Astrocyte of the cerebellum (primary cell): ENCODE measurements at regions of chr17 and their contacts with region 1.

Region 1: DNA sequence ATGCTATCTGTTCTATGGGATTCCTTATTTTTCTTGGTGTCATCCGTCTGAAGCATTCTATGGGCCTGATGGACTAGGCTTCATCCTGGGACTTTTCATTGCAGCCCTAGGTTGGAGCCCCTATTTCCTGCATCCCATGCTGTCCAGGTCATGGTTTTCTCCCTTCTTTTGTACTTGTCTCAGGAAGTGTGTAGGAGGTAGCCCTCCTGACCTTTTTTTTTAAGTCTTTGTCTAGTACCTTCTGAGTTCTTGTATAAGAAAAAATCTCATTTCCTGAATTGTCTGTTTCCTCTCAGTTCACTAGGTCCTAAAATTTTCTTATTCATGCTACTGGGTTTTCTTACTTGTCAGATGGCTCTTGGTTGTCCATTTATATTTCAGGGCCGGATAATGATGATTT is 6.0 kb downstream of the NDEL1 start:
- DNase-seq: no peak
- H3K4me3 ChIP-seq: no peak overlapping the region
- CTCF ChIP-seq: no peak

Region 2: DNA sequence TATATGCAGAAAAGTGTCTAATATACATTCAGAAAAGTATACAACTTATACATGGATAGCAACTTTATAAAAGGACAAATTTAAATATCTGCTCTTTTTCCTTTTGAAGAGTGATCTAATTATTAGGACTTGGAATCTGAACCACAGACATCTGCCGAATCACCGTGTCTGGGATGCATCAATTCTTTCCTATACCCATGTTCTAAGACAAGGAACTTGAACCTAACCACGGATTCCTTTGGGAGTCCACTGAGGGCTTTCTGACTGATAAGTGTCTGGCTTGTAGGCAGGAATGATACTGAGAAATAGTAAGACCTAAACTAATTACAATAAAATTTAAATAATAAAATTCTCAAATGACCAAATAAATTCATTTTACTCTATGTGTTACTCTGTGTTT is 48.2 kb after region 1 on chr17:
- in situ Hi-C with region 1: loop called (anchors 5 kb)
- DNase-seq: no peak
- H3K4me3 ChIP-seq: no peak overlapping the region
- CTCF ChIP-seq: no peak